ENCODE measurements at regions of chr19 and their contacts with region 1.

Region 1: GRCh38 chr19:38877781-38878574 is at the start of gene RINL:
- DNase-seq: peak; percentile 84
- ATAC-seq: peak; percentile 92
- H3K4me3 Mint-ChIP-seq: peak within 1 kb of the TSS; percentile 95
- H3K27ac Mint-ChIP-seq: peak within 1 kb of the TSS; percentile 98
- H3K4me1 Mint-ChIP-seq: peaks cover 37% of the 10 kb centered on the region
- H3K27me3 Mint-ChIP-seq: no peaks in the 10 kb centered on the region
- total RNA-seq, gene RINL: 58.9 to 63.5 TPM

Region 2: DNA sequence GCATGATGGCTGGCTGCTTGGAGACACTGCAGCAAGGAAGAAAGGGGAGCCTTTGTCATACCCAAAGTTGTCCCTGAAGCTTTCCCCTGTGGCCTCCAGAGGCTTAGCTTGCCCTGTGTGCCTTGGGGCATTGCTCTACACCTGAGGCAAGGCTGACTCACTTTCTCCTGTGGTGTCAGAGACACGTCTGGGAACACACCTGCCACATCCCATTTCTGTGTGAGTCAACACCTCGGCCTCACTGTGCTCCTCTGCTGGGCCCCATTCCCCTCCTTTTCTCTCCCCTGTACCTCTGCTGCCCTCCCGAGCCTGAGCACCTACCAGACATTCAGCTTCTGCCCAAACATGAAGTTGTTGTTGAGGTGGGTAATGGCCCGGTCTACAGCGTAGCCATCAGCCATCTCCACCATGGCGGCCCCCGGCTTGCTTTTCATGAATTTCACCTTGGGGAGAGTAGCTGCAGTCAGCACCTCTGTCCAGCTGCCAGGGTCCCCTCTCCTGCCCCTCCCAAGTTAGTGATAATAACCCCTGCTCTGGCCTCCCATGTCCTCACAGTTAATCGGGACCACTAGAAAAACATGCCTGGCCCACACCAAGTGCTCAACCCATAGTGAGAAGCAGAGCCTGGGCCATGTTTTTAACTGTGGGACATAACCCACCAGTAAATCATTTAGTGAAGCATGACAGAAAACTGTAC is 39.3 kb before region 1 on chr19:
- CTCF ChIA-PET with region 1: interaction called, 4 read pairs
- POLR2A ChIA-PET with region 1: interaction called, 13 read pairs
- DNase-seq: peak; percentile 28
- ATAC-seq: no peak
- H3K4me3 Mint-ChIP-seq: no peak overlapping the region
- H3K27ac Mint-ChIP-seq: peak overlapping the region; percentile 55
- H3K4me1 Mint-ChIP-seq: peaks cover 55% of the 10 kb centered on the region
- H3K27me3 Mint-ChIP-seq: no peaks in the 10 kb centered on the region

Region 3: DNA sequence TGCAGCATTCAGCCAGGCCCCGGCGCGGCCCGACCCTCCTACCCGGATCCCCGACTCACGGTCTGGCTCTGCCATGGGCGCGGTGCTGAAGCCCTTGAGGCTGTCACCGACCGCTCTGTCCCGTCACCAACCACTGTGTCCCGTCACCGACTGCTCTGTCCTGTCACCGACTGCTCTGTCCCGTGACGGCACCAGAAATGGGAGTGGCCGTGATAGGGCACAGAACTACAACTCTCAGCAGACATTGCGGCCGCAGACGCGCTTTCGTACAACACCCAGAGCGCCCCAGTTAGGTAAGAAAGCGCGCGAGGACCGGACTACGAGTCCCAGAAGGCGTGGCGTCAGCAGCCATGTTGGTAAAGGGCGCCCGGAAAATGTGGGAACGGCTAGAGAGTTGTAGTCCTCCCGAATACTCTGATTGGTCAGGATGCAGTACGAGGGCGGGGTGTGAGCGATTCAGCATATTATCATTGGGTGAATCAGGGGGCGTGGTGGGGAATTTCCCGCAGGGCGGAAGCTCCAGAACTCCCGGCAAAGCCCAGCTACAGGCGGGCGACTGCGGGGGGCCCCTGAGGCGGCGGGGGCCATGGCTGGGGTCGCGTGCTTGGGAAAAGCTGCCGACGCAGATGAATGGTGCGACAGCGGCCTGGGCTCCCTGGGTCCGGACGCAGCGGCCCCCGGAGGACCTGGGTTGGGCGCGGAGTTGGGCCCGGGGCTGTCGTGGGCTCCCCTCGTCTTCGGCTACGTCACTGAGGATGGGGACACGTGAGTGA is 21.7 kb after region 1 on chr19 and contains the starts of genes NFKBIB and SIRT2:
- CTCF ChIA-PET with region 1: interaction called, 7 read pairs
- POLR2A ChIA-PET with region 1: interaction called, 17 read pairs
- DNase-seq: peak; percentile 100
- ATAC-seq: peak; percentile 93
- H3K4me3 Mint-ChIP-seq: peak within 1 kb of the TSS; percentile 91
- H3K27ac Mint-ChIP-seq: peak within 1 kb of the TSS; percentile 95
- H3K4me1 Mint-ChIP-seq: peaks cover 37% of the 10 kb centered on the region
- H3K27me3 Mint-ChIP-seq: no peaks in the 10 kb centered on the region
- total RNA-seq, gene NFKBIB: 31.9 to 36.6 TPM
- total RNA-seq, gene SIRT2: 36.4 to 40.3 TPM

Region 4: DNA sequence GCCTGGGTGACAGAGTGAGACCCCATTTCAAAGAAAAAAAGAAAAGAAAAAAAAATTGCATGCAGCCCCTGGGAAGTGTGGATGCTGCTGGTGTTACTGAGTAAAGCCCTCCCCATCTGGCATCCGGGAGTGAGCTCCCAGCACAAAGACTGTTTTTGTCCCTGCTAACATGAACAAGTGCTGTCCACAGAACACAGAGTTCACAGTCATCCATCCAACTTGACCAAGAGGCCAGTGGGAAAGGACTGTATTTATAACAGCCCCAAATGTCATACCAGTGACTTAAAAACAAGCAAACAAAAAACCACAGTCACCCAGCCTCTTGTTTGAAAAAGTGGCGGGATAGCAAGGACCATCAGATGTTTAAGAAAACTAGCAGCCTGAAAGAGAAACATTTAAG is 86.8 kb after region 1 on chr19:
- CTCF ChIA-PET with region 1: no interaction called
- POLR2A ChIA-PET with region 1: no interaction called
- DNase-seq: no peak
- ATAC-seq: no peak
- H3K4me3 Mint-ChIP-seq: no peak overlapping the region
- H3K27ac Mint-ChIP-seq: no peak overlapping the region
- H3K4me1 Mint-ChIP-seq: peaks cover 3% of the 10 kb centered on the region
- H3K27me3 Mint-ChIP-seq: peaks cover 12% of the 10 kb centered on the region

Measured in activated CD8-positive, alpha-beta T cell treated with anti-CD3 and anti-CD28 coated beads, Interleukin-2, amount 10 ng/mL, durations not matched to agents 7 days and 5 days (primary cell).